CD4-positive, alpha-beta memory T cell (primary cell): ENCODE measurements at regions of chr7 and their contacts with region 1.

Region 1: DNA sequence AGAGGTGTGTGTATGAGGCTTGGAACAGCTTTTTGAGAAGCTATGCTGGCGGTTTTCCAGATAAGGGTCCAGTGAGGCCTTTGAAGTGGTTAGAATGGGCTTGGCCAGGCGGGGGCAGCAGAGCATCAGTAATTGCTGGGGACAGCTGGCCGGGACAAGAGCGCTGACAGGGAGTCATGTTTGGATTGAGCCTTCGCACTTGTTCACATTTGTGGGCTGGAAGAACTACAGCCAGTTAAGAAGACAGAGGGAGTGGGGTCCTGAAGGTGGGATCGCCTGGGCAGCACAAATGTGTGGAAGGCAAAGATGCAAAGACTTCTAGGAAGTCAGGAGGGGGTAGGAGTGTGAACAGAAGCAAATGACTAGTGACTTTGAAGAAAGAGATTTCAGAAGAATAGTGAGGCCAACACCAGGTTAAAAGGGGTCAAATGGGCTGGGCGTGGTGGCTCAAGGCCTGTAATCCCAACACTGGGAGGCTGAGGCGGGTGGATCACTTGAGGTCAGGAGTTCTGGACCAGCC is 12.7 kb upstream of the SDHAF3 start:
- DNase-seq: peak; percentile 27 to 59 (median 50)
- H3K4me3 ChIP-seq: no peak overlapping the region
- H3K4me3 Mint-ChIP-seq: no peak overlapping the region
- H3K27ac ChIP-seq: no peak overlapping the region
- H3K27ac Mint-ChIP-seq: no peak overlapping the region
- H3K4me1 ChIP-seq: no peaks in the 10 kb centered on the region
- H3K4me1 Mint-ChIP-seq: no peaks in the 10 kb centered on the region
- H3K27me3 ChIP-seq: no peaks in the 10 kb centered on the region
- H3K27me3 Mint-ChIP-seq: peaks cover 15 to 22% of the 10 kb centered on the region in 2 donors

Region 2: DNA sequence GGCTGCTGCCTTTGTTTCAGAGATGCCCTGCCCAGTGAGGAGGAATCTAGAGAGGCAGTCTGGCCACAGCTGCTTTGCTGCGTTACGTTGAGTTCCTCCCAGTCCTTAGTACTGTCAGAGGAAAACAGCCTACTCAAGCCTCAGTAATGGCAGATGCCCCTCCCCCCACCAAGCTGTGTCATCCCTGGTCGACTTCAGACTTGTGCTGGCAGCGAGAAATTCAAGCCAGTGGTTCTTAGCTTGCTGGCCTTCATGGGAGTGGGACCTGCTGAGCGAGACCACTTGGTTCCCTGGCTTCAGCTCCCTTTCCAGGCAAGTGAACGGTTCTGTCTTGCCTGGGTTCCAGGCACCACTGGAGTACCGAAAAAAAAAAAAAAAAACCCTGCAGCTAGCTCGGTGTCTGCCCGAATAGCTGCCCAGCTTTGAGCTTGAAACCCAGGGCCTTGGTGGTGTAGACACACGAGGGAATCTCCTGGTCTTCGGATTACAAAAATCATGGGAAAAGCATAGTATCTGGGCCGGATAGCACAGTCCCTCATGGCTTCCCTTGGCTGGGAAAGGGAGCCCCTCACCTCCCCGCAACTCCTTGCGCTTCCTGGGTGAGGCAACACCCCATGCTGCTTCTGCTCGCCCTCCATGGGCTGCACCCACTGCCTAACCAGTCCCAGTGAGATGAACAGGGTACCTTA is 21.8 kb after region 1 on chr7:
- CTCF ChIA-PET with region 1: no interaction called
- POLR2A ChIA-PET with region 1: no interaction called
- intact Hi-C with region 1: no loop called
- DNase-seq: no peak
- H3K4me3 ChIP-seq: no peak overlapping the region
- H3K4me3 Mint-ChIP-seq: no peak overlapping the region
- H3K27ac ChIP-seq: no peak overlapping the region
- H3K27ac Mint-ChIP-seq: no peak overlapping the region
- H3K4me1 ChIP-seq: peaks cover 3% of the 10 kb centered on the region
- H3K4me1 Mint-ChIP-seq: peaks cover 11 to 27% (median 20%) of the 10 kb centered on the region in 4 donors
- H3K27me3 ChIP-seq: no peaks in the 10 kb centered on the region
- H3K27me3 Mint-ChIP-seq: no peaks in the 10 kb centered on the region

Region 3: GRCh38 chr7:97601941-97602457 is 497.2 kb after region 1 on chr7:
- CTCF ChIA-PET with region 1: no interaction called
- POLR2A ChIA-PET with region 1: no interaction called
- intact Hi-C with region 1: no loop called
- DNase-seq: no peak
- H3K4me3 ChIP-seq: no peak overlapping the region
- H3K4me3 Mint-ChIP-seq: no peak overlapping the region
- H3K27ac ChIP-seq: no peak overlapping the region
- H3K27ac Mint-ChIP-seq: no peak overlapping the region
- H3K4me1 ChIP-seq: no peaks in the 10 kb centered on the region
- H3K4me1 Mint-ChIP-seq: no peaks in the 10 kb centered on the region
- H3K27me3 ChIP-seq: no peaks in the 10 kb centered on the region
- H3K27me3 Mint-ChIP-seq: no peaks in the 10 kb centered on the region

Region 4: DNA sequence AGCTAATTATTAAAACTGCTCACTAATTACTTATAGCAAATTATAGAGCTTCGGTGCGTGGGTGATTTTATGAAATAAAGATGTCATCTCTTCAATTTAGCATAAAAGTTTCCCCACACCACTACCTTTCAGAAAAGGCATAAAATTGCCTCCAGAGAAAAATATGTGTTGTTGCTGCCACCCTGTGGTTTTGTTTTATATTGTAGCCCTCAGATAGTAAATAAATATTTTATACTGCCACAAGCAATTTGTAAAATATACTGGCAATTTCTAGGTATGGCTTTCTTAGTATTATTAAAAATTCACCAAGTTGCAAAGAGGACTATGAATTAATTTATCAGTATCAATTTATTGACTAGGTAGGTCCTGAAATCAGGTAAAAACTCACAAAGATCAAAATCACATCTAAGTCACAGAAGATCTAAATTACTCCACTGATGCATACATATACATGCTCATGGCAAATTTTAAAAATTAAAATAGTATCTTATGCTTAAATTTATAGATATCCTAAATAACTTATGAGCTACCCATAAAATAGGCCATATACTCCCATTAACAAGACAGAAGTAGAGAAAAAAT is 740.9 kb after region 1 on chr7:
- CTCF ChIA-PET with region 1: no interaction called
- POLR2A ChIA-PET with region 1: no interaction called
- intact Hi-C with region 1: loop called (anchors 2 kb)
- DNase-seq: peak in 2 of 5 donors; percentile 4 to 10
- H3K4me3 ChIP-seq: no peak overlapping the region
- H3K4me3 Mint-ChIP-seq: no peak overlapping the region
- H3K27ac ChIP-seq: no peak overlapping the region
- H3K27ac Mint-ChIP-seq: no peak overlapping the region
- H3K4me1 ChIP-seq: no peaks in the 10 kb centered on the region
- H3K4me1 Mint-ChIP-seq: no peaks in the 10 kb centered on the region
- H3K27me3 ChIP-seq: no peaks in the 10 kb centered on the region
- H3K27me3 Mint-ChIP-seq: peaks cover 3 to 4% of the 10 kb centered on the region in 2 donors